Right ventricle myocardium inferior (tissue), 1 donor: ENCODE measurements at regions of chr1 and their contacts with region 1.

Region 1: DNA sequence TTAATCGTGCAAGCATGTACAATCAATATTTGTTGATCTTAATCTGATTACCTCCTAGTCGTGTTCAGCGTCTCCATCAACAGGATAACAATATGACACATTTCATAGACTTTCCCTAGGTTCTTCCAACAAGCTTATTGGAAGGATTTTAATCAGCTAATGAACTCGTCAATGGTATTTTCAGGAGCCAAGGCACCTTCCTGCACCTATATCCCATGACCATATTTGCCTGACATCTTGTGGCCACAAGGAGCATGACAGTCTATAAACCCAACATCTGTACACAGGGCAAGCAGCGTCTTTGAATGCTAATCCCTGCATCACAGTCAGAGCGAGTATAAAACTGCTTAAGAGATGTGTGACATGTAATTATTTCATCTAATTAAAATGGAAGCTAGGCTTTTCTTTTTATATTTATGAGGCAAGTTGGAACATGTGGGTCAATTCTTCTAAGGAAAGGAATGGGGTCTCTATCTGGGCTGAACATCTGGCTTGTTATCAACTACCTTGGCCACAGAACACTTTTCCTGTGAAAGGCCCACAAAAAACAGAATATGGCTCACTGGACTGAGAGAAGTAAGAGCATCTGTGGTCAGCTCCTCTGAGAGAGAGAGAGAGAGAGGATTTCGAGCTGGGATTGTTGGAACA is 388.8 kb downstream of the NTNG1 start:
- DNase-seq: no peak
- ATAC-seq: no peak

Region 2: GRCh38 chr1:107277022-107277421 is 252.6 kb before region 1 on chr1:
- intact Hi-C with region 1: loop called (anchors 10 kb)
- DNase-seq: no peak
- ATAC-seq: no peak